Activated CD4-positive, alpha-beta T cell treated with anti-CD3 and anti-CD28 coated beads, Interleukin-2, amount 10 ng/mL, durations not matched to agents 24 days and 14 days (primary cell): ENCODE measurements at regions of chr3 and their contacts with region 1.

Region 1: DNA sequence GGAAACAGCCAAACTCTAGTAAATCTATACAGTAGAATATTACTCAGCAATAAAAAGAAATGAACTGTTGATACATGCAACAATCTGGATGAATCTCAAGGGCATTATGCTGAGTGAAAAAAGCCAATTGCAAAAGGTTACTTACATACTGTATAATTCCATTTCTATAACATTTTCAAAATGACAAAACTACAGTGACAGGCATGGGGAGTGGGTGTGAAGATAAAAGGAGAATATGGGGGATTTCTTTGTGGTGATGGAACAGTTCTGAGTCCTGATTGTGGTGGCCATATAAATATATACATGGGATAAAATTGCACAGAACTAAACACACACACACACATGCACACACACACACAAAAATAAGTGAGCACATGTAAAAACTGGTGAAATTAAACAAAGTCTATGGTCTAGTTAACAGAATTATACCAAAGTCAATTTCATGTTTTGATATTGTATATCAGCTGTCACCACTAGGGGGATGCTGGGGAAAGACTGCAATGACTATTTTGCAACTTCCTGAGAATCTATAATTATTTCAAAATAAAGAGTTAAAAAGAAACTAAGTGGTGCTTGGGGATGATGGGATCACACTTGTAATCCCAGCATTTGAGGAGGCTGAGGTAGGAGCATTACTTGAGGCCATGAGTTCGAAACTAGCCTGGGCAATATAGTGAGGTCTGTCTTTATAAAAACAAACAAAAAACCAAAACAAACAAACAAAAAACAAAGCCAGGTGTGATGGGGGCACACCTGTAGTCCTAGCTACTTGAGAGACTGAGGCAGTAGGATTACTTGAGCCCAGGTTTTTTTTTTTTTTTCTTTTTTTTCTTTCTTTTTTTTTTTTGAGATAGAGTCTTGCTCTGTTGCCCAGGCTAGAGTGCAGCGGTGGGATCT is 66.0 kb downstream of the SPTSSB start:
- DNase-seq: no peak
- H3K4me3 Mint-ChIP-seq: no peak overlapping the region
- H3K27ac Mint-ChIP-seq: no peak overlapping the region
- H3K4me1 Mint-ChIP-seq: peaks cover 3% of the 10 kb centered on the region
- H3K27me3 Mint-ChIP-seq: peaks cover 52% of the 10 kb centered on the region

Region 2: DNA sequence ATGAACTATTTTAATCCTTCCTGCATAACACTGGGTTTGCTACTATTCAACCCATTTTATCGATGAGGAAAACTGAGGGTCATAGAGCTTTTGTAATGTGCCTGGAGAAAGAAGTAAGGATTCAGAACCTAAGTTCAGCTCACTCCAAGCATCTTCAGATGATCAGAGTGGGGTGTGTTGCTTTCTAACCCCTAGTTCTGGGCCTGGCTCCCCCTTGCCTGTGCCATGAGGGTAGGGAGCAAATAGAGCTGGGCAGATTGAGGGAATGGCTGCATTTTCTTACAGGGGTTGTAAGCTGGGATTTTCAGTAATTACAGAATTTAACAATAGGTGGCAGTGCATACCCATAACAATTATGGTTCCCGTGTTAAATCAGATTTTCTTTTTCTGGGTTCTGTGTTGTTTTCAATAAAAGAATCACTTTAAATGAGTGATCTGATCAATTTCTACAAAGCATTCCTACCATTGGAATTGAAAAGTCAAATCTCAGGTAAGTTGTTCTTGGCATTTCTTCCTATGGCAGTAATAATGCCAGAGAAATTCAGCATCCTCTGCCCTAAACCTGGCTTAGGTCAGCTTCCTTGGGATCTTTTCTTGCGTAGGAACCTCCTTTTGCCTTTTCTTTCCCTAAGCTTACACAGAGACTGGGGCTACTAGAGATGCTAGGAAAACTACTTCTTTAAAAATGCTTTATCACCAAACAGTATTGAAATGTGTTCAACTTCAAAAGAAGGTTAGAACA is 1420.5 kb before region 1 on chr3:
- intact Hi-C with region 1: loop called (anchors 10 kb)
- DNase-seq: peak; percentile 62
- H3K4me3 Mint-ChIP-seq: no peak overlapping the region
- H3K27ac Mint-ChIP-seq: no peak overlapping the region
- H3K4me1 Mint-ChIP-seq: no peaks in the 10 kb centered on the region
- H3K27me3 Mint-ChIP-seq: peaks cover 25% of the 10 kb centered on the region

Region 3: GRCh38 chr3:161343986-161344385 is 38.6 kb after region 1 on chr3:
- intact Hi-C with region 1: no loop called
- DNase-seq: no peak
- H3K4me3 Mint-ChIP-seq: no peak overlapping the region
- H3K27ac Mint-ChIP-seq: no peak overlapping the region
- H3K4me1 Mint-ChIP-seq: no peaks in the 10 kb centered on the region
- H3K27me3 Mint-ChIP-seq: peaks cover 46% of the 10 kb centered on the region